ENCODE measurements at regions of chr1 and their contacts with region 1.

Region 1: GRCh38 chr1:203340112-203340804 is 10.7 kb downstream of the FMOD start:
- H3K4me3 ChIP-seq: no peak overlapping the region
- H3K27ac ChIP-seq: no peak overlapping the region
- H3K4me1 ChIP-seq: no peaks in the 10 kb centered on the region
- CTCF ChIP-seq: peak; percentile 46; the same call in 1 of the 2 replicates

Region 2: GRCh38 chr1:203048555-203049051 is 291.7 kb before region 1 on chr1:
- CTCF ChIA-PET with region 1: no interaction called
- POLR2A ChIA-PET with region 1: no interaction called
- H3K4me3 ChIP-seq: no peak overlapping the region
- H3K27ac ChIP-seq: no peak overlapping the region
- H3K4me1 ChIP-seq: 0 out of 2 replicates have a peak, but pooled peaks cover 5% of the 10 kb centered on the region
- CTCF ChIP-seq: no peak

Region 3: DNA sequence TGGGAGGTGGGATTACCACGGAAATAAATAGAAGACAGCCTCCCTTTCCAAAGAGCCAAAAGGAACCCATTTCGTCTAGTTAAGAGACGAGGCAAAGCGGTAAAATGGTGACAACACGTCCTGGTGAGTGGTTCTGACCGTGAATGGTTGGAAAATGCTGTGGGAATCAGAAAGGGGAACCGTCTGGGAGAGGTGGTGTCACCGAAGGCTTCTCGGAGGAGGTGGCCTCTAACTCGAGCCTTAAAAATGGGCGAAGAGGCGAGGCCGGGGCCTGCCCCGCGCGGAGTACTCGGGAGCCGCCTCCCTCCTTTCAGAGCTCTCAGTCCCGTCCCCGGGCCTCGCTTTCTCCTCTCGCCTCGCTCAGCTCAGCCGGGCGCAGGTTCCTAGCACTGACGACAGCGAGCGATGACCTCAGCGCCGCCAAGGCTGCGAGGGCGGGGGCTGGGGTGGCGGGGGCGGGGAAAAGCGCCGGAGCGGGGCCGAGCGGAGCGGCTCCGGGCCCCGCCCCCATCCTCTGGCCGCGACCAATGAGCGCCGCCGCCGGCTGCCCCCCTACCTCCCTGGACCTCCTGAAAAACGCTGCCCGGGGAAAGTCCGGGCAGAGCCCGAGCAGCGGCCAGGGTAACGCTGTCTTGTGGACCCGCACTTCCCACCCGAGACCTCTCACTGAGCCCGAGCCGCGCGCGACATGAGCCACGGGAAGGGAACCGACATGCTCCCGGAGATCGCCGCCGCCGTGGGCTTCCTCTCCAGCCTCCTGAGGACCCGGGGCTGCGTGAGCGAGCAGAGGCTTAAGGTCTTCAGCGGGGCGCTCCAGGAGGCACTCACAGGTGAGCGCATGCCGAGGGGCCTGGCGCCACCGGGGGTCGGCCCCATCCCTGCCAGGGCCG is 35.1 kb before region 1 on chr1 and contains the start of gene BTG2:
- CTCF ChIA-PET with region 1: interaction called, 23 read pairs
- POLR2A ChIA-PET with region 1: interaction called, 3 read pairs
- H3K4me3 ChIP-seq: peak within 1 kb of the TSS; percentile 91
- H3K27ac ChIP-seq: peak within 1 kb of the TSS; percentile 95
- H3K4me1 ChIP-seq: peaks cover 16% of the 10 kb centered on the region; the same call in 1 of the 2 replicates
- CTCF ChIP-seq: peak; percentile 28; the same call in 1 of the 2 replicates

Region 4: DNA sequence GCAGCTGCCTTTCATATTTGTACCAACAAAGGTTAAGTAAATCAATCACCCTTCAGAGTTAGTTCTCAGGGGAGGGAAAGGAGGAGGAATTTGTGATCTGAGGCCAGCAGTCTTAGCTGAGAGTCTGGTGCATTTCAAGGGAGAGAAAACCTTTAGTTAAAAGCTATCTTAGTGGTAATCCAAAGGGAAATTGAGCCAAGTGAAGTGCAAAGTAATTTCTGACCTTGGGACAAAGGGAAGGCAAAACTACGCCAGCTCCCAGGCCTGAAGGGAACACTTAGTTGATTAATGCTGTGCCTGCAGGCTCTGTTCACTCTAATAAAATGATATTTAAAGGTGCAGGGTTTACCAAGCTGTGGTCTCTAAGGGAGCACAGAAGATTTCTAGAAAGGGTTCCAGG is 33.7 kb after region 1 on chr1:
- CTCF ChIA-PET with region 1: interaction called, 12 read pairs
- POLR2A ChIA-PET with region 1: no interaction called
- H3K4me3 ChIP-seq: no peak overlapping the region
- H3K27ac ChIP-seq: no peak overlapping the region
- H3K4me1 ChIP-seq: no peaks in the 10 kb centered on the region
- CTCF ChIP-seq: no peak

Region 5: DNA sequence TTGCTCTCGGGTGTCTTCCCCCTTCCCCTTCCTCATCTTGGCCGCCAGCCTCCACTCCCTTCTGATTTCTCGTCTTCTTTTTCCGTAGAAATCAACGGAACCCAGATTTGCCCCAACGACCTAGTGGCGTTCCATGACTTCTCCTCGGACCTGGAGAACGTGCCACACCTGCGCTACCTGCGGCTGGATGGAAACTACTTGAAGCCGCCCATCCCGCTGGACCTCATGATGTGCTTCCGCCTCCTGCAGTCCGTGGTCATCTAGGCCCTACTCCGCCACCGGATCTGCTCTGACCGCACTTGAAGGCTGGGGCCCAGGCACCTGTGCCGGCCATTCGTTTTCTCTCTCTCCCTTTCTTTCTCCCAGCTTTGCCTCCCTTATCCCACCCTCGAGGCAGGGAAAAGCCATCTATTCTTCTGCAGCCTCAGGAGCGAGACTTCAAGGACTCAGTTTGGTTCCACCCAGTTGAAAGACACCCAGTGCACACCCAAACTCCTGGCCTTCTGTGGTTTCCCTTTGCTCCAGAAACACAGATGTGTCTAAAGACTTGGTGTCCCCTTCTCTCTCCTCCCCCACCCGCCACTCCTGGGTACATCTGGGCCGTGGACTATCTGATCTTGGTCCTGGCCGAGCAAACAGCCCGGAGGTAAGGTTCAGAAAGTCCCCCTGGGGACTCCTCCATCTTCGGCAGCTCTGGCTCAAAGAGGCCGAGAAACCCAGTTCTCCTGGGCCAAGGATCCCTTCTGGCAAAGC is 146.5 kb after region 1 on chr1:
- CTCF ChIA-PET with region 1: interaction called, 182 read pairs
- POLR2A ChIA-PET with region 1: interaction called, 3 read pairs
- H3K4me3 ChIP-seq: no peak overlapping the region
- H3K27ac ChIP-seq: peak overlapping the region; percentile 10; the same call in 1 of the 2 replicates
- H3K4me1 ChIP-seq: no peaks in the 10 kb centered on the region
- CTCF ChIP-seq: no peak

Region 6: DNA sequence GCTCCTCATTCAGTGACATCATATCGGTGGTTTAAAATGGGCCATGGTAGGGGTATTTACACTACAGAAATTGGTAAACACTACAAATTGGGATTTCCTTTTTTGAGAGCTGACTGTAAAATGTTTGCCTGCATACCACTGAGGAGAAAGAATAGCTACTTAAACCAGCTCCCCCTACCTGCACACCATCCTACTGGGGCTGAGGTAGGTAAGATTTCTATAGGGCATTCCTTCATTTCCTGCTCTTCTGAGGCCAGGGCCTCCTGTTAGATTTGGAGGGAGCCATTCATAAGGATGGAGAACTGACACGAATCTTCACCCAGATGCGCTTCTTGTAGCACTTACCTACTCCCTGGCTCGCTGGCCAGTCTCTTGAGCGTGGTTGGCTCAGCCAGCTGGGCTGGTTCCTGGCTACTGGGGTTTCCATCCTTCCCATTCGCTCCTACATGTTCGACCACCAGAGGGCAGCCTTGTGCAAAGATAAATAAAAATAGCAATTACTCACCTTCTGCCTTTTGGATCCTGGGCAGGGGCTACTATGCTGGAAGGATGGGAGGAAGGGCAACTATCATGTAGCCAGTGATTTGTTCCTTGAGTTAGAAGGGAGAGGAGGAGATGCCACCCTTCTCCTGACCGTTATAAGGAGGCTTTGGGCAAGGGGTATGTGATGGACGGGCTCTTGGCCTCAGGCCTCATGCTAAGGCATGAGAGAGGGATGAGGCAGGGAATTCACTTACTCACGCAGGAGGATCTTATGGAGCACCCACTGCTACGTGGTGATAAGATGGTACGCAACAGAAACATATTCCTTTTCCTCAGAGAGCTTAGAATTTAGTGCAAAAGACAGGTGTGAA is 164.4 kb after region 1 on chr1:
- CTCF ChIA-PET with region 1: interaction called, 22 read pairs
- POLR2A ChIA-PET with region 1: no interaction called
- H3K4me3 ChIP-seq: no peak overlapping the region
- H3K27ac ChIP-seq: no peak overlapping the region
- H3K4me1 ChIP-seq: no peaks in the 10 kb centered on the region
- CTCF ChIP-seq: peak; percentile 84

Region 7: DNA sequence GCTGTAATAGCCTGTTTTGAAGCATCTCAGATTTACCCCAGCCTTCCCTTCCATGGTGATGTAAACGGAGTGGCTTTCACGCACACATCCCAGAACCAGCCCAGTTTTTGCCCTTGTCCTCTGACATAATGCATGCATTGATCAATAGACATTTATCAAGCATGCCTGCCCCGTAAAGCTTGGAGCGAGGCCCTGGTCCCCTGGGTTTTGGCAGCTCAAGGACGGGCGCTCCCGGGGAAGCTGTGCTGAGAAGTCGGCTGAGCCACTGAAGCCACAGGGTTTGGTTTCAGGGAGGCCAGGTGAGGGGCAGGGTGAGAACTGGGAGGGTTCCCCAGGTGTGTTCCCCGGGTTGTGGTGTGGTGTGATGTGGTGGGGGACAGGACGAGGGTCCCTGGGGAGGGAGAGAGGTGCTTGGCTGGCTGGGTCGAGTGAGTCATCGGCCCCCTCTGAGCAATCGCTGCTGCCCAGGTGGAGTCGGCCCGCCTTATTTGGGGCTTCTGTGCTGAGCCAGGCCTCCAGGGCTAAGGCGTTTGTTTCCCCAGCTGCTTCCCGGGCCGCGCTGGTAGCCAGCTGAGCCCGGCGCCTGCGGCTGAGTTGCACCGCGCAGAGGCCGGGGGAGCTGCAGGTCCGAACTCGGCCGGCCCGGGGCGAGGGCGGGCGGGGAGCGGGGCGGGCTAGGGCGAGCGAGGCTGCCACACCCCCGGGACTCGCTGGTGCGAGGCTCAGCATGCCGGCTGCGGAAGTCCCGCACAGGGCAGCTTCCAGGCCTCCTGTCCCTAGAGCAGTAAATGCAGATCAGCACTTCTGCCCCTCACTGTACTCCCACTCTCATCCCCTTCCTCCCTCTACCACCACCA is 310.0 kb after region 1 on chr1:
- CTCF ChIA-PET with region 1: no interaction called
- POLR2A ChIA-PET with region 1: no interaction called
- H3K4me3 ChIP-seq: no peak overlapping the region
- H3K27ac ChIP-seq: peak overlapping the region; percentile 29; the same call in 1 of the 2 replicates
- H3K4me1 ChIP-seq: peaks cover 2% of the 10 kb centered on the region; the same call in 1 of the 2 replicates
- CTCF ChIP-seq: no peak